ENCODE measurements at regions of chr9 and their contacts with region 1.

Region 1: GRCh38 chr9:127637322-127637847 is 25.3 kb downstream of the STXBP1 start:
- DNase-seq: no peak
- H3K4me3 ChIP-seq: no peak overlapping the region
- CTCF ChIP-seq: no peak
- POLR2A ChIP-seq: no peak

Region 2: GRCh38 chr9:127300886-127301447 is 336.4 kb before region 1 on chr9:
- intact Hi-C with region 1: no loop called
- DNase-seq: no peak
- H3K4me3 ChIP-seq: no peak overlapping the region
- CTCF ChIP-seq: no peak
- POLR2A ChIP-seq: no peak

Region 3: DNA sequence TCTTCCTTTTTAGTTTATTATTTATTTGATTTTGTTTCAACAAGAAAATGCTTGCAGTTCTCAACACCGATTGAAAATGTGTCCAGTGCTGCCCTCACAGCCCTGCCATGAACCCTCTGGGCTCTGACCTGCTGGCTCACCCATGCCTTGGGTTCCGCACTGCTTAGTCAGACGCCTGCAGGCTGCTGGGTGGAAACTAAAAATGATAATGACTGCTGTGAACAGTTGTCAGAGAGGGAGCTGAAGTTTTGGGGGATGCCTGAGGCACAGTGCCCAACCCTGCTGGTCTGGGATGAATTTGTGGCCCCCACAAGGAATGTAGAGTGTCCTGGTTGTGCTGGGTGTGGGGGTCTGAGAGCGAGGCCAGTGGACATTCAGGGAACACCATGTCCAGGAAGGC is 47.2 kb after region 1 on chr9:
- intact Hi-C with region 1: loop called (anchors 10 kb)
- DNase-seq: no peak
- H3K4me3 ChIP-seq: no peak overlapping the region
- CTCF ChIP-seq: no peak
- POLR2A ChIP-seq: no peak

Region 4: GRCh38 chr9:127869310-127870152 is 232.1 kb after region 1 on chr9:
- intact Hi-C with region 1: no loop called
- DNase-seq: peak; percentile 82 to 97
- H3K4me3 ChIP-seq: no peak overlapping the region
- CTCF ChIP-seq: peak in 1 of 3 donors; percentile 81
- POLR2A ChIP-seq: no peak

Measured in lower leg skin (tissue), 4 donors.